ENCODE measurements at regions of chr6 and their contacts with region 1.

Region 1: DNA sequence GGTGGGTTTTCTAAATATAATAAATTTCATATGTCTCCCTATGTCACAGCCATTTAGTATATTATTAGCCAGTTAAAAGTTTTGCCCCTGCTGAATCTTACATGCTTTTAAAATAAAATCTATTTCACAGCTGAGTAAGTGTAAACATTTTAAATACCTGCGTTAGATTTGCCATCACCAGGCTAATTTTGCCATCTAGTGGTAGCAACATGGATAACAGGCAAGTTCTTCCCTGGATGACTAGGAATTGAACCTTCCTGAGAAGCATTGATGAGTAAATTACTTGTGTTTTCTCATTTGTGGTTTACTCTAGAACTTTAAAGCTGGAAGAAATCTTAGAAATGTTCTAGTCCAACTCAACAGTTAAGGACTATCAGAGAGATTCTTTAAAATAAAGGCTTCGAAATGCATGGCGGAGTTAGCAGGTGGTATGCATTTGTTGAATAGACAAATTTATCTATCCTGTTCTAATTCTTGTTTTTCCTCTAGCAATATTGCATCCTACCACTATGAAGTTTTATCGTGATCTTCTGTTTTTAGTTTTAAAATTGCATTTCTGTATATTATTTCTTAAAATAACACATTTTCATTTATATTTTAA is 2.6 kb downstream of the PRSS35 start:
- DNase-seq: peak; percentile 34 to 67 (median 50)
- ATAC-seq: peak; percentile 56; the same call in 1 of the 3 replicates
- H3K4me3 ChIP-seq: no peak overlapping the region
- H3K27ac ChIP-seq: no peak overlapping the region
- H3K4me1 ChIP-seq: peaks cover 0 to 9% of the 10 kb centered on the region in 2 experiments; a peak in 3 of 5 replicates
- H3K27me3 ChIP-seq: peaks cover 0 to 7% of the 10 kb centered on the region in 2 experiments; a peak in 2 of 5 replicates
- CTCF ChIP-seq: peak; percentile 70 to 86 (median 75); a peak in 5 of 6 replicates
- EP300 ChIP-seq: no peak
- POLR2A ChIP-seq: no peak
- RAD21 ChIP-seq: peak; percentile 90 to 95

Region 2: DNA sequence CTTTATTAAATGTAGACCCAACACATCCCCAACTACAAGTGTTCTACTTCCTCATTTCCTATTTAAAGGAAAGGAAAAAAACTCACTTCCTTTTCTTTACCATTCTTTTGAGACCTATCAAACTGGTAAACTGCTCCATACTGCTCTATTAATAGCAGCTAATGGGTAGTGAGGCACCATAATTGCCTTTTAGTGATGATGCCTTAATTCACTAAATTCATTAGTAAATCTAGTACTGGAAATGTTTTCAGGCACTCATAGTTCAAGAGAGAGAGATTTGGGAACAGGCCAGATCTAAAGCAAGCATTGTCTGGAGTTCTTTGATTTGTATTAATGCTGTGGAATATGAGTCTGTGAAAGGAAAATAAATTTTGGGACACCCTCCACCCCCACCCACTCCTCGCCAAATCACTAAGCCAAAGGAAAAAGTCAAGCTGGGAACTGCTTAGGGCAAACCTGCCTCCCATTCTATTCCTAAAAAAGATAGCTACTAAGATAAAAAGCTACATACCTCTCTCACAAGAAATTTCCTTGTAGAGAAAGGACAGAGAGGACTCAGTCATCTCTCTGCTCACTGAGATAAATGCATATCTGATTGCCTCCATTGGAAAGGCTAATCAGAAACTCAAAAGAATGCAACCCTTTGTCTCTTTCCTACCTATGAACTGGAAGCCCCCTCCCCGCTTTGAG is 1253.8 kb before region 1 on chr6:
- CTCF ChIA-PET with region 1: no interaction called
- POLR2A ChIA-PET with region 1: no interaction called
- in situ Hi-C with region 1: loop called (anchors 10 kb)
- intact Hi-C with region 1: no loop called
- DNase-seq: no peak
- ATAC-seq: no peak
- H3K4me3 ChIP-seq: no peak overlapping the region
- H3K27ac ChIP-seq: no peak overlapping the region
- H3K4me1 ChIP-seq: no peaks in the 10 kb centered on the region; a peak in 1 of 5 replicates
- H3K27me3 ChIP-seq: no peaks in the 10 kb centered on the region
- CTCF ChIP-seq: no peak
- EP300 ChIP-seq: no peak
- POLR2A ChIP-seq: no peak
- RAD21 ChIP-seq: no peak

Region 3: DNA sequence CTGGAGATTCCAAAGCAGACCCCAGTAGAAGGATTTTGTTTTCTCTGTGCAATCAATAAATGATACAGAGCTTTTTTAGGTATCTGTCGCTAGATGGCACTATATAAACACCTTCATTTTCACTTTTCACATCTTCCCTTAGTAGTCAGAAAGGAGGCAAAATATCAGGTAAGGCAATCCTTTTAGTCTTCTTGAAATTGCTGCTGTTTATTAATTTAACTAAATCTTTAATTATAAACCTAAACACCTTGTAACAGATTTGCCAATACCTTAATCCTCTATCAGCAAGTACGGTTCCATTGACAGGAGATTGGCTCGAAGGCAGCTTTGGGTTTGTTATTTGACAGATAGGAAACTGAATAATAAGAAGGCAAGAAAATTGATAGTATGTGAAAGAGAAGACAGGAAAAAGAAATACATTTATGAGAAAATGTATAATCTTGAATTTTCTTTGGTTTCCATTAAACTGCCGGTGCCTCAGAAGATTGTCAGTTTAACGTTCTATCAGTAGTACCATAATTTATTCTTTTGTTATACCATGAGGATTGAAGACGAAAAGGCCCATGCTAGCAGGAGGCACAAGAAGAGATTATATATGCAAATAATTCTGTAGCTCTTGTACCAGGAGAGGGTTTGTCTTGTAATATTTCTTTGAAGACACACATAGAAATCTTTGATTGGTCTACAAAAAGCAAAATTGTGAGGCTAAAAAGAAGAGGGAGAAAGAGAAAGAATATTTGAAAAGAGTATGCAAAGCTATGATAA is 1243.9 kb before region 1 on chr6:
- CTCF ChIA-PET with region 1: no interaction called
- POLR2A ChIA-PET with region 1: no interaction called
- in situ Hi-C with region 1: loop called (anchors 10 kb)
- intact Hi-C with region 1: loop called (anchors 10 kb)
- DNase-seq: peak; percentile 38 to 44 (median 40)
- ATAC-seq: peak; percentile 71
- H3K4me3 ChIP-seq: no peak overlapping the region
- H3K27ac ChIP-seq: no peak overlapping the region
- H3K4me1 ChIP-seq: no peaks in the 10 kb centered on the region
- H3K27me3 ChIP-seq: peaks cover 4 to 5% of the 10 kb centered on the region in 2 experiments; a peak in 3 of 5 replicates
- CTCF ChIP-seq: peak in 2 of 3 experiments; percentile 36 to 73; a peak in 4 of 6 replicates
- EP300 ChIP-seq: no peak
- POLR2A ChIP-seq: no peak
- RAD21 ChIP-seq: peak; percentile 82 to 87

Region 4: DNA sequence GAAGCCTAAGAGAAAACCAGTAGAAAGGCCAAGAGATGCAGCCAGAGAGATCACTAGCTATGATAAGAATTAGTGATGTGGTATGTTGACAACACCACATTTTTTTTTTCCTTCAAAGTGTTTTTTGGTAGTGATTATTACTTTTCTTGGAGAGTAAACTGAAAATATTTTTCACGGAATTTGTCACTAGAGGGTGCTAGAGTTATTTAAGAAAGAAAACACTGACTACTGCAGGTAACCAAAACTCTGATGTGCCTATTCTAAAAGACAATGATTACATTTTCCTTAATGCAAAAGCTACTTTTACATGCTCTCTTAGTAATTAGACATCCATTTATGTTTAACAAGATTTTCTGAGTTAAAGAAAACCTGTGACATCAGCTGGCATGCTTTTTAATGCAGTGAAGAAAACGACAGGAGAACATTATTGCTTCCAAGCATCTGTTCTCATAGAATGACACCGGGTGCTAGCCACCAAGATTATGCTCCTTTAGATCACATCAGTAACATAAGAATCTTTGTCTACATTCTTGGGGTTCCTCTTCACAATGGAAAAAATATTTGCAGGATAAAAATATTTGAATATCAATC is 293.0 kb before region 1 on chr6:
- CTCF ChIA-PET with region 1: interaction called, 29 read pairs
- POLR2A ChIA-PET with region 1: interaction called, 3 read pairs
- in situ Hi-C with region 1: loop called (anchors 5 kb)
- intact Hi-C with region 1: loop called (anchors 1 kb)
- DNase-seq: peak in 2 of 4 experiments; percentile 21 to 48
- ATAC-seq: peak; percentile 64; the same call in 2 of the 3 replicates
- H3K4me3 ChIP-seq: no peak overlapping the region
- H3K27ac ChIP-seq: no peak overlapping the region
- H3K4me1 ChIP-seq: no peaks in the 10 kb centered on the region
- H3K27me3 ChIP-seq: no peaks in the 10 kb centered on the region
- CTCF ChIP-seq: peak; percentile 33 to 75 (median 45); a peak in 3 of 6 replicates
- EP300 ChIP-seq: no peak
- POLR2A ChIP-seq: no peak
- RAD21 ChIP-seq: peak; percentile 82 to 84

Region 5: DNA sequence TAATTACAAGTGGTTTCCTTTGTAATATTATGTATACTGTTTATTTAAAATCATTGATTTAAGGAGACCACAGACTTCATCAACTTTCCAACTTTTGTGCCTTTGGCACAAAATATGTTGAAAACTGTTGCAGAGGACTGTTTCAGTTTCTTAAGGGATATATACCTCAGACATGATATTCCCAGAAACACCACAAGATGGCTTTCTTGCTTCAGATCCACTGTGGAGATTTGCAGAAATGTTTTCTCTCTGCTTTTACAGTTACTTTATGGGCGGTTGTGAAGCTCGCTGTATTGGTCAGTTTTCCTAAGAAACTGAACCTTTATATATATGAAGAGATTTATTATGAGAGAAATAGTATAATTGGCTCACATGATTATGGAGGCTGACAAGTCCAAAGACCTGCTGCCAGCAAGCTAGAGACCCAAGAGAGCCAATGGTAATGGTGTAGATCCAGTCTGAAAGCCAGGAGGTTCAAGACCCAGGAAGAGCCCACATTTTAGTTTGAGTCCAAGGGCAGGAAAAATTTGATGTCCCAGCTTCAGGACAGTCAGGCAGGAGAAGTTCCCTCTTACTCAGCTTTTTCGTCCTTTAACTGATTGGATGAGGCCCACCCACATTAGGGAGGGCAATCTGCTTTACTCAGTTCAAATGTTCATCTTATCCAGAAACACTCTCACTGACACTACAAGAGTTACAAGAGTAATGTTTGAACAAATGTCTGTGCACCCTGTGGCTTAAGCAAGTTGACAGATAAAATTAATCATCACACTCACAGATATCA is 96.9 kb before region 1 on chr6:
- CTCF ChIA-PET with region 1: interaction called, 21 read pairs
- POLR2A ChIA-PET with region 1: no interaction called
- in situ Hi-C with region 1: loop called (anchors 5 kb)
- intact Hi-C with region 1: loop called (anchors 1 kb)
- DNase-seq: peak; percentile 18 to 67 (median 32)
- ATAC-seq: peak; percentile 93
- H3K4me3 ChIP-seq: no peak overlapping the region
- H3K27ac ChIP-seq: no peak overlapping the region
- H3K4me1 ChIP-seq: peaks cover 0 to 4% of the 10 kb centered on the region in 2 experiments; a peak in 1 of 5 replicates
- H3K27me3 ChIP-seq: no peaks in the 10 kb centered on the region
- CTCF ChIP-seq: peak; percentile 55 to 80 (median 55); a peak in 4 of 6 replicates
- EP300 ChIP-seq: no peak
- POLR2A ChIP-seq: no peak
- RAD21 ChIP-seq: peak; percentile 75 to 94